ENCODE measurements at regions of chr3 and their contacts with region 1.

Region 1: GRCh38 chr3:197298341-197298857 is at the start of gene DLG1:
- DNase-seq: peak; percentile 93

Region 2: GRCh38 chr3:197117092-197117491 is 181.3 kb before region 1 on chr3:
- in situ Hi-C with region 1: no loop called
- DNase-seq: no peak

Region 3: GRCh38 chr3:197456261-197457091 is 158.1 kb after region 1 on chr3:
- in situ Hi-C with region 1: loop called (anchors 25 kb)
- DNase-seq: peak; percentile 89